Uterus (tissue), 4 donors: ENCODE measurements at regions of chr1 and their contacts with region 1.

Region 1: DNA sequence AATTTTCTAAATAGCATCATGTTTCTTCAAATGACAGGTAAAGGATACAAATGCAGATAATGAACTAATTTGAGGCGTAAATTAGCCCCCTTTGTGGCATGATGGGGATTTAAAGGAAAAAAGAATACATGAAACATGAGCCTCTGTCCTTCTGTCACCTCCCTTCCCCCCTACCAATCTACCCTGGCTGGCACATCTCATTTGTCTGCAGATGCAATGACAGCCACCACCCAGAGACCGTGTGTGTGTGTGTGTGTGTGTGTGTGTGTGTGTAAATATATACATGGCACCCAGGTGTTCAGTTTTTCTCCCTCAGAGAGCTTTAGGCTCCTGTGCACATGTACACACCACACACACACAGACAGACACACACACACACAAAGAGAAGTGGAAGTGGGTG is 451.1 kb downstream of the RWDD3 start:
- DNase-seq: no peak
- H3K4me3 ChIP-seq: no peak overlapping the region
- H3K27ac ChIP-seq: no peak overlapping the region
- H3K4me1 ChIP-seq: no peaks in the 10 kb centered on the region
- H3K27me3 ChIP-seq: no peaks in the 10 kb centered on the region
- CTCF ChIP-seq: no peak
- POLR2A ChIP-seq: no peak

Region 2: GRCh38 chr1:95547005-95547404 is 138.1 kb before region 1 on chr1:
- intact Hi-C with region 1: no loop called
- DNase-seq: no peak
- H3K4me3 ChIP-seq: no peak overlapping the region
- H3K27ac ChIP-seq: no peak overlapping the region
- H3K4me1 ChIP-seq: no peaks in the 10 kb centered on the region
- H3K27me3 ChIP-seq: no peaks in the 10 kb centered on the region
- CTCF ChIP-seq: no peak
- POLR2A ChIP-seq: no peak

Region 3: GRCh38 chr1:95660736-95661135 is 24.3 kb before region 1 on chr1:
- intact Hi-C with region 1: loop called (anchors 2 kb)
- DNase-seq: no peak
- H3K4me3 ChIP-seq: no peak overlapping the region
- H3K27ac ChIP-seq: no peak overlapping the region
- H3K4me1 ChIP-seq: no peaks in the 10 kb centered on the region
- H3K27me3 ChIP-seq: no peaks in the 10 kb centered on the region
- CTCF ChIP-seq: no peak
- POLR2A ChIP-seq: no peak